B cell (primary cell): ENCODE measurements at regions of chr4 and their contacts with region 1.

Region 1: DNA sequence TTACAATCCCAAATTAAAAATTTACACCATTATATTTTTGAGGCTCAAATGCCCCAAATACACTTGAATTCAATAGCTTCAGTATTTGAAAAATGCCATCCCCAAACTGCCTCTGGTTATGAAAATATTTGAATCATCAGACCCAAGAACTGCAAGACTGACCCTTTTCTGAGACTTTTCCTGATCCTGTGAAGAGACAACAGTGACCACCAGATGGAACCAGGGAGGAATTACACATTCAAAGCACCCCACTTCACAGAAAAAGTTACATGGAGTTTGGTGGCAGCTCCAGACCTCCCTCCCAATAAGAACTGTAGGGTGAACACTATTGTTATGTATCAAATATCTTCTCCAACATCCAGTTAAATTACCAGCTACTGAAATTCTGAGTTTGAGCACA is 44.0 kb upstream of the SCD5 start:
- DNase-seq: no peak
- ATAC-seq: no peak
- H3K4me3 ChIP-seq: no peak overlapping the region
- H3K4me3 Mint-ChIP-seq: no peak overlapping the region
- H3K27ac ChIP-seq: no peak overlapping the region
- H3K27ac Mint-ChIP-seq: no peak overlapping the region
- H3K4me1 ChIP-seq: no peaks in the 10 kb centered on the region
- H3K4me1 Mint-ChIP-seq: no peaks in the 10 kb centered on the region
- H3K27me3 ChIP-seq: no peaks in the 10 kb centered on the region
- H3K27me3 Mint-ChIP-seq: no peaks in the 10 kb centered on the region
- CTCF ChIP-seq: peak; percentile 35

Region 2: GRCh38 chr4:82462415-82462831 is 380.2 kb before region 1 on chr4:
- CTCF ChIA-PET with region 1: no interaction called
- POLR2A ChIA-PET with region 1: no interaction called
- intact Hi-C with region 1: loop called (anchors 5 kb)
- DNase-seq: peak; percentile 86
- ATAC-seq: peak; percentile 98
- H3K4me3 ChIP-seq: no peak overlapping the region
- H3K4me3 Mint-ChIP-seq: no peak overlapping the region
- H3K27ac ChIP-seq: no peak overlapping the region
- H3K27ac Mint-ChIP-seq: no peak overlapping the region
- H3K4me1 ChIP-seq: peaks cover 5 to 8% of the 10 kb centered on the region in 2 donors
- H3K4me1 Mint-ChIP-seq: peaks cover 25% of the 10 kb centered on the region
- H3K27me3 ChIP-seq: no peaks in the 10 kb centered on the region
- H3K27me3 Mint-ChIP-seq: no peaks in the 10 kb centered on the region
- CTCF ChIP-seq: peak; percentile 87

Region 3: GRCh38 chr4:82618103-82618720 is 224.4 kb before region 1 on chr4:
- CTCF ChIA-PET with region 1: no interaction called
- POLR2A ChIA-PET with region 1: no interaction called
- intact Hi-C with region 1: no loop called
- DNase-seq: no peak
- ATAC-seq: no peak
- H3K4me3 ChIP-seq: no peak overlapping the region
- H3K4me3 Mint-ChIP-seq: no peak overlapping the region
- H3K27ac ChIP-seq: no peak overlapping the region
- H3K27ac Mint-ChIP-seq: no peak overlapping the region
- H3K4me1 ChIP-seq: no peaks in the 10 kb centered on the region
- H3K4me1 Mint-ChIP-seq: no peaks in the 10 kb centered on the region
- H3K27me3 ChIP-seq: no peaks in the 10 kb centered on the region
- H3K27me3 Mint-ChIP-seq: peaks cover 3% of the 10 kb centered on the region
- CTCF ChIP-seq: no peak

Region 4: DNA sequence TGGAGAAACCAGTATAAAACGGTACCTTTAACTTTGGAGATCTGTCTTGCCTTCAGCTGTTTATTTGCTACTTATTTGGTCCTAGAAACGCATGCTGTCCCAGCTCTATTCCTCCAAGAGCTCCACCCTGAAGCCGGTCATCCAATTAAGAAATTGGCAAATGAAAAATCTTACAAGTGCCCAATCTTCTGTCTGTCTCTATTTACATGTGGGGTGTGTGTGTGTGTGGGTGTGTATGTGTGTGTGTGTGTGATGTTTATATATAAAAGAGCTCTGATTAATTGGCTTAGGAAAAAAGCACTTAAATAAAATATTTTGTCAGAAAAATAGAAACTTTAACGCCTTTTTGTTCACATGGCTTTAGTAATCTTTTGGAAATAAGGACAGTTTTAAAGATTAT is 254.4 kb after region 1 on chr4:
- CTCF ChIA-PET with region 1: no interaction called
- POLR2A ChIA-PET with region 1: no interaction called
- intact Hi-C with region 1: no loop called
- DNase-seq: no peak
- ATAC-seq: no peak
- H3K4me3 ChIP-seq: no peak overlapping the region
- H3K4me3 Mint-ChIP-seq: no peak overlapping the region
- H3K27ac ChIP-seq: peak overlapping the region in 1 of 2 donors; percentile 23
- H3K27ac Mint-ChIP-seq: peak overlapping the region; percentile 46
- H3K4me1 ChIP-seq: peaks cover 5 to 15% of the 10 kb centered on the region in 2 donors
- H3K4me1 Mint-ChIP-seq: peaks cover 35% of the 10 kb centered on the region
- H3K27me3 ChIP-seq: no peaks in the 10 kb centered on the region
- H3K27me3 Mint-ChIP-seq: no peaks in the 10 kb centered on the region
- CTCF ChIP-seq: no peak